ENCODE measurements at regions of chr13 and their contacts with region 1.

Region 1: DNA sequence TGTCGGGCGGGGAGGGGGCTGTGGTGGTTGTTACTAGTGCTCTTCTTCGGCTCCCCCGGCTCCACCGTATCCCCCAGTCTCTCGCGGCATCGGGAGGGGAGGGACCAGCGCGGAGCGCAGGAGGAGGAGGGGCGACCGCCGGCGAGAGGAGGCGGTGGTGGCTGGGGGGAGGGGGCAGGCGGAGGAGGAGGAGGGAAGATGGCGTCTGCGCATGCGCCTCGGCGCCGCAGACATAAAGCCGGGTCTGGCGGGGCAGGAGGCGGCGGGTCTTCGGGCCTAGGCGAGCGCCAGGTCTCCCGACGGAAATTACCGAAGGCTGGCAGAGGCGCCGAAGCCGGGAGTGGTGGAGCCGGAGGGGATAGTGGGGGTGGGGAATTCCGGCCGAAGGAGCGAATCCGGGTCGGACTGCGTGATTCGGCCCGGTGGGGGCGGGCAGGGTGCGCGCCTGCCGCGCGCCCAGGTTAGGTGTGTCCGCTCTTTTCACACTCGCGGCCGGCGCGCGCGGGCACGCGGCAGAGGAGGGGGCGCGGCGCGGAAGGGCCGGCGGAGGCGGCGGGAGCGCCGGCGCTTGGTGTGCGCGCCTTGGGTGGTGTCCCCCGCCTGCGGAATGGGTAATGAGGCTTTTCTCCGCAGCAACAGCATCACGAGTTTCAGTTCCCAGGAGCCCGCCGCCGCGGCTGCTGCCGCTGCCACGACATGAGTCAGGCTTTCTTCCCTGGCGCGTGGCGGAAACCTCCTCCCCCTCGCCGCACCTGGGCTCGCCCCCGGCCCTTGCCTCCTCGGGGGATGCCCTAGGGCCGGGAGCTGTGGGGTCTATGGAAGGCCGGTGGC is 1.3 kb upstream of the TSC22D1 start:
- DNase-seq: peak; percentile 92 to 99 (median 93)

Region 2: DNA sequence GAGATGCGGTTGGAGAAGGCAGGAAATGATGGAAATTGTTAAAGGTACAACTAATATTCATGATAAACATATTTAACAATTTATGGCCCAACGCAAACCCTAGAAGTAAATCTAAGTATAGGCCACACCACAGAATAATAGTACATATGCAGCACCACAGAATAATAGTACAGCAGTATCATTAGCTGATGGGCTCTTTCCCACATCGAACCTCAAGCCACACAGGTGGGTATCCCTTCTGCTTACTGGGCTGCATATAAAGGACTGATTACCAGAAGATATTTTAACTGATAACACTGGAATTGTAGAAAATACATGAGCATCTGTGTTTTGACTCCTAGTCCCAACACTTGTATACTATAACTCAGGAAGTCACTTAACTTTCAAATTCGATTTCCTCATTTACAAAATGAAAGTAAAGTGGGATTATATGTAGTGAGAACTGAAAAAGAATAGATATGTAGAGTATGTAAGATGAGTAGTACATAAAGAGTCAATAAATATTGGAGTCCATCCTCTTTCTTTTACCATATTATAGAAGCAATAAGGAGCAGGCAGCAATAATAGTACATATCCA is 92.8 kb before region 1 on chr13:
- intact Hi-C with region 1: loop called (anchors 10 kb)
- DNase-seq: no peak